Motor neuron (in vitro differentiated cells): ENCODE measurements at regions of chr7 and their contacts with region 1.

Region 1: DNA sequence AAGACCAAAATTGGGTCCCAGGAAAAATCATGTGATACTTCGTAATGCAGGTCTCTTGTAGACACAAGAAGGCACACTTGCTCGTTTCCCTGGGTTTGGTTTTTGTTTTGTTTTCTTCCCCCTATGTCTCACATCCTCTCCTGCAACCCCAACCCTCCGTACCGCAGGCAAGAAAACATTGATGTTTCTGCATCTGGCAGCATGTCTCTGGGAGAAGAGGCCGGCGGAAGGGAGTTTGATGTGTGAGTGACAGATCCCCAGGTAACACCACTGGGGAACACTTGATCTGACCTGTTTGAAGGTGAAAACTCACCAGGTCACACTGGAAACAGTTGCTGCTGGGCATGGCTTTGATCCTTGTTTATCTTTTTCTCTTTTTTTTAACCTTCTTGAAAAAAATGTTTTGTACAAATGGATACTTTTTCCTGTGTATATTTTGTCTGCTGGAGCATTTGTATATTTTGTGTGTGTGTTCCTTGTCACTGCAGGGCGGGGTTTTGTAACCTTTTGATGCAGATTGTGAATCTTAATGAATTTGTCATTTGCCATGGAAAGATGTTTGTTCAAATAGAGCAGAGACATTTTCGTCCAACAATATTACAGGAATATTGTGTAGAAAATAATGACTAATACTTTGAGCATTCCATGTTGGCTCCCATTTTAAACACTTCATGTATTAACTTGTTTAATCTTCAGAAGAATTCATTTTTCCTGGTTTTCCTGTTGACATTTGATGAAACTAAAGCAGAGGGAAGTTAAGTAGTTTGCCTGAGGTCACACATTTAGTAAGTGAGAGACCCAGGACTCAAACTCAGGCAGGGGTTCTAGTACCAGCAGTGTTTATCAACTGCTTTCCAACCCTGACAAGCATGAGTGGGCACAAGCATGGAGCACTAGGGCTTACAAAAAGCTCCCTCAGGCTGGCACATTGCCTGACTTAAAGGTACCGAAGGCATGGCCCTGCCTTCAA is 718.8 kb downstream of the AUTS2 start:
- ATAC-seq: no peak
- H3K4me3 ChIP-seq: no peak overlapping the region
- H3K27ac ChIP-seq: no peak overlapping the region
- H3K4me1 ChIP-seq: peaks cover 0 to 8% of the 10 kb centered on the region in 2 donors

Region 2: DNA sequence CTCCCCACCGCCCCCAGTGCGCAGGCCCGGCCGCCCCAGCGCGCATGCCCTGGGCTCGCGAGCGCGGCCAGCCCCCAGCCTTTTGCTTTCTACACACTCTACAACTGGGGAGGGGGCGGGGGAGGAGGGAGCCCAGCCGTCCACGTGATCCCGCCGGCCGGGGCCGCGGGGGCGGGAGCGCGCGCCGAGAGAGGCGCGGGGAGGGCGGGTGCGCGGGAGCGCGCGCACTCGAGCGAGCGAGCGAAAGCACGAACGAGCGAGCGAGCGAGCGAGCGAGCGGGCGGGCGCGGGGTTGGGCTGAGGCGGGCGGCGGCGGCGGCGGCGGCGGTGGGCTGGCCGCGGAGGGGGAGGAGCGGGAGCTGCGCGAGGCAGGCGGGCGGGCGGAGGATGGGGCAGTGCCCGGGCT is 719.0 kb before region 1 on chr7 and contains the start of gene AUTS2:
- in situ Hi-C with region 1: no loop called
- ATAC-seq: peak; percentile 61 to 89 (median 76)
- H3K4me3 ChIP-seq: peak within 1 kb of the TSS; percentile 69 to 100 (median 76)
- H3K27ac ChIP-seq: peak within 1 kb of the TSS; percentile 80 to 92
- H3K4me1 ChIP-seq: peaks cover 6 to 10% of the 10 kb centered on the region in 2 donors
- total RNA-seq, gene AUTS2: 0.49 to 68.6 (median 32.2) TPM

Region 3: DNA sequence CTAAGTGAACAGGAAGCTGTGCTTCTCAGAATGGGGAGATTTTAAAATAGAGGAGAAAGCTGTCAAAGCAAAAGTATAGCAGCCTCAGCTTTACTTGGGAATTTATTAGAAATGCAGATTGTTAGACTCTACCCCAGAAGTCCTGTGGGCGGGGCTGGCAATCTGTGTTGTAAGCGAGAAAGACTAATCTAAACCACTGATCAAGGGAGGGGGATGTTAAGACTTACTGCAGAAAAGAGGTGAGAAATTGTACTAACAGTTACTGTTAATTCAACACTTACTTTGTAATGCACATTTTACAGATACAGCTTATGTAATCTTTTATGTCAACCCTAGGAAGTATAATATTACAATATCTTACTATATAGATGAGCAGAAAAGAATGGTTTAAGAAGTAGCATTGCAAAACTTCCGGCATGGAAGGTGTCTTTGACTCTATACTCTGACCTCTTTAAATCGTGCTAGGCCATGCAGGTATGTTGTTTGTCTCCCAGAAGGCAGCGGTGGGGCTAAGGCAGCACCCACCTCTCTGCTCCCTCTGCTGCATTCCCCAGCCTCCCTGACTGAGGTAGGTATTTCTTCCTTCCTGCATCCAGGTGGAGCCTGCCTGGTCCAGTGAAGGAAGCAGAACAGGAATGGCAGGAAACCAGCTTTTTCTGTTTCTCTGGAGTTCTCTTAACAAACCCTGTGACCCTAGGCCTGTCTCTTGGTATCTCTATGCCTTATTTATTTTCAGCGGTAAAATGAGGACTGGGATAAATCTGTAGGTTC is 256.6 kb before region 1 on chr7:
- in situ Hi-C with region 1: no loop called
- ATAC-seq: peak in 1 of 8 experiments; percentile 87
- H3K4me3 ChIP-seq: no peak overlapping the region
- H3K27ac ChIP-seq: no peak overlapping the region
- H3K4me1 ChIP-seq: peaks cover 19 to 29% of the 10 kb centered on the region in 2 donors

Region 4: GRCh38 chr7:70154521-70155180 is 162.4 kb before region 1 on chr7:
- in situ Hi-C with region 1: no loop called
- ATAC-seq: no peak
- H3K4me3 ChIP-seq: no peak overlapping the region
- H3K27ac ChIP-seq: no peak overlapping the region
- H3K4me1 ChIP-seq: peaks cover 3 to 8% of the 10 kb centered on the region in 2 donors

Region 5: DNA sequence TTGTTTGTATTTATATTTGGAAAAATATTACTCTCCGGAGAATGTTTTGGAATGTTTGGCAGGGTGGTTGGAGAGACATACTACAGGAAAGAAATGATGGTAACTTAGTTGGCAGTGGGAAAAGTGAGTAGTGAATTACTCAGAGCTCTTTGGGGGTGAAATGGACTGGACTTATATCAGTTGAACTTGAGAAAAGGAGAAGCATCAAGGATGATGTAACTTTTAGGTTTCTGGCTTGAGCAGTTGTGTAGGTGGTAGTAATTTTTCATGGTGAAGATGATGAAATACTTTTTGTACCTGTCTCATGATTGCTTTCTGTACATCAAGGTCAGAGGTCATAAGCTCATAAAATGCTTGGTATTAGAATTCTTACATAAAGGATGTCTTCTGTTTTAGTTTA is 101.6 kb before region 1 on chr7:
- in situ Hi-C with region 1: loop called in 1 of 9 experiments (anchors 25 kb)
- ATAC-seq: no peak
- H3K4me3 ChIP-seq: no peak overlapping the region
- H3K27ac ChIP-seq: no peak overlapping the region
- H3K4me1 ChIP-seq: peaks cover 2 to 17% of the 10 kb centered on the region in 2 donors